Endothelial cell of umbilical vein (primary cell): ENCODE measurements at regions of chr10 and their contacts with region 1.

Region 1: DNA sequence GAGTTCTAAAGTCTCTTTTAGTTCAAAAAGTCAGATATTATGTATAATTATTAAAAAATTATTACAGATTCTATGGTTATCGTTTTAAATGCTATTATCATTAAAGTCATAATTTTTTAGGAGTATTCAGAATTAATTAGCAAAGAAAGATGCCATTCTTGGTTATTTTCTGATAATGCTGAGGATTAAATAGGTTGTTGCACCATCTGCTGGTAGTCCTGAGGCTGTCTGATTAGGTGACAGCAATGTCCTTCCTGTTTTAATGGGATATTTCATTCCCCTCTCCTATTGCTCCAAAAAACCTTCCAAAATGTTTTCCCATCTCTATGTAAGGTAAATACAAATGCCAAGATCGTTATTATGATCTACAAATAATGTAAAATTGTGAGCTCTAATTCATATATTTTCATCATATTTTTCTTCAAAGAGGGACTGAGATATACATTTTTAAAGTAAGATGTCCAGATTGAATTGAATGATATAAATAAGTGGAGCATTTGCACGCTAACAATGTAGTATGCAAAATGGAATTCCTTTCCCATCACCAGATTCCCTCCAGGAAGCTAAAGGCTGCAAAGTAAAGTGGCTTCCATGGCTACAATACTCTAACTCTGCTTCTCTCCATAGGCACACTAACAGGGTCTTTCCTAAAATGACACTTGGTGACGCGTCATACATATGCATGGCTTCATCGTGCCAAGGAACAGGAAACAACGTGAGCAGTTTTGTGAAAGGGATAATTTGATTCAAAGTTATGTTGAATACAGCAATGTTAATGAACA is 58.8 kb upstream of the AKR1E2 start:
- DNase-seq: peak; percentile 74
- H3K4me3 ChIP-seq: no peak overlapping the region
- H3K27ac ChIP-seq: peak overlapping the region; percentile 96
- H3K4me1 ChIP-seq: peaks cover 83% of the 10 kb centered on the region
- H3K27me3 ChIP-seq: no peaks in the 10 kb centered on the region
- CTCF ChIP-seq: peak; percentile 49 to 50
- POLR2A ChIP-seq: no peak

Region 2: GRCh38 chr10:3197348-3198003 is 1569.7 kb before region 1 on chr10:
- CTCF ChIA-PET with region 1: interaction called, 17 read pairs
- POLR2A ChIA-PET with region 1: no interaction called
- dilution Hi-C with region 1: no loop called
- intact Hi-C with region 1: loop called (anchors 1 kb)
- DNase-seq: peak; percentile 86
- H3K4me3 ChIP-seq: peak overlapping the region in 2 of 3 experiments; percentile 1 to 6
- H3K27ac ChIP-seq: no peak overlapping the region
- H3K4me1 ChIP-seq: peaks cover 12% of the 10 kb centered on the region
- H3K27me3 ChIP-seq: peaks cover 0 to 6% of the 10 kb centered on the region in 2 experiments
- CTCF ChIP-seq: peak; percentile 93 to 96
- POLR2A ChIP-seq: no peak

Region 3: DNA sequence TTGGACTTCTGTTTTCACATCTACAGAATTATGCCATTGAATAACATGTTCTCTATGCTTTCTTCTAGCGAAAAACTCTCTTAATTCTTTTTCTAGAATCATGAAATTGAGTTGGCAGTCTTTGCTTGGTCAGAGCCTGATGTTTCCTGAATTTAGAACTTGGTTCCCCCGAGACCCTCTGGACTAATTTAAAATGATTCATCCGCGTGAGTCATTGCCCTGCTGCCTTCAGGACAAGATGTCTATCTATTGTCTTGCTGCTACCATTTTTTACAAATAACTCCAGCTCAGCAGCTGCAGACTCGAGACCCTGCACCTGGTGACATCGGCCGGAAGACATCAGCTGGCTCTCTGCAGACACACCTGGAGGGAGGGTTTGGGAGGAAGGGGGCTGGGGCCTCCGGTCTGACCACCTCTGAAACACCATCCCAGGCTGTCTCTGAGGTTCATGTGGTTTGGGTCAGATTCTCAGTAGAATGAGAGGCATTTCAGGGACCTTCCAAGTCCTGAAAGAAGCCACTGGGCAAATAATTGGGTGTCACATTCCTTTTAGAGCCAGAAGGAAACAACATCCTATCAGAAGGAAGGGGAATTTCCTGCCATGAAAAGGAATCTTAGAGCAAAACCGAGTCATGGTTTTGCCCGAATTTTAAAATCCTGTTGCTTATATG is 961.3 kb before region 1 on chr10:
- CTCF ChIA-PET with region 1: no interaction called
- POLR2A ChIA-PET with region 1: interaction called, 3 read pairs
- dilution Hi-C with region 1: no loop called
- intact Hi-C with region 1: loop called (anchors 1 kb)
- DNase-seq: peak; percentile 96
- H3K4me3 ChIP-seq: peak overlapping the region in 1 of 3 experiments; percentile 31
- H3K27ac ChIP-seq: peak overlapping the region; percentile 100
- H3K4me1 ChIP-seq: peaks cover 70% of the 10 kb centered on the region
- H3K27me3 ChIP-seq: no peaks in the 10 kb centered on the region
- CTCF ChIP-seq: no peak
- POLR2A ChIP-seq: peak; percentile 29

Region 4: DNA sequence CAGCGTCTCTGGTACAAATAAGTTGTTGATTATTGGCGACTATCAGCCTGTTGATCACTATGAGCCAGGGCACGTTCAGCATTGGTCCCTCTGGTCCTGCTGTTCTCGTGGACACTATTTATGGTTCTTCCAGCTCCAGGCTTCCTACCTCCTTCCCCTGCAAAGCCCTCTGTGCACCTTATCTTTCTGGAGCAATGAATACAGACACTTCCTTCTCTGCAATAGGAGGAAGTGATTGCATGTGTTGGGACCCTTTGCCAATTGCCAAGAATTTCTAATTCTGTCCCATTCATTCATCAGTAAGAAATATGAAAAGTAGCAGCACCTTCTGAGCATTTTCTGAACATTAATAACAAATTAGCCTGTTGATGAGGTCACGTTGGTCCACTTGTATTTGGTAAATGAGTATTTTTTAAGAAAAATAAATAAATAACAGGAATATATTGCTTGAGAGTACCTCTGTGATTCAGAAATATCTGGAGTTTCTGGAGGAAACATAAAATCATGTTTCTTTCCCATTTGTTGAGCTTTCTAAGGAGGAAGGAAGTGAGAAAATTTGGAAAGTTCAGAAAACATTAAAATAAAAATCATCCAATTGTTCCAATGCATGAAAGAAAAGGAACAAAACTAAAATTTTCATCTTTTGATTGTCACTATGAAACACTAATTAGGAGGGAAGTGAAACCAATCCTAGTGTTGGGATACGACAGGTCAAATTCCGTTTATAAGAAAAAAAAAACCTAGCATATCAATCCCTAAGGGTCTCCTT is 723.1 kb before region 1 on chr10:
- CTCF ChIA-PET with region 1: no interaction called
- POLR2A ChIA-PET with region 1: no interaction called
- dilution Hi-C with region 1: no loop called
- intact Hi-C with region 1: loop called (anchors 1 kb)
- DNase-seq: peak; percentile 97
- H3K4me3 ChIP-seq: no peak overlapping the region
- H3K27ac ChIP-seq: peak overlapping the region; percentile 66
- H3K4me1 ChIP-seq: peaks cover 21% of the 10 kb centered on the region
- H3K27me3 ChIP-seq: no peaks in the 10 kb centered on the region
- CTCF ChIP-seq: no peak
- POLR2A ChIP-seq: peak; percentile 67

Region 5: GRCh38 chr10:4391683-4392082 is 375.5 kb before region 1 on chr10:
- CTCF ChIA-PET with region 1: no interaction called
- POLR2A ChIA-PET with region 1: no interaction called
- dilution Hi-C with region 1: no loop called
- intact Hi-C with region 1: loop called (anchors 5 kb)
- DNase-seq: peak; percentile 27
- H3K4me3 ChIP-seq: no peak overlapping the region
- H3K27ac ChIP-seq: no peak overlapping the region
- H3K4me1 ChIP-seq: no peaks in the 10 kb centered on the region
- H3K27me3 ChIP-seq: no peaks in the 10 kb centered on the region
- CTCF ChIP-seq: peak in 1 of 2 donors; percentile 15
- POLR2A ChIP-seq: no peak

Region 6: DNA sequence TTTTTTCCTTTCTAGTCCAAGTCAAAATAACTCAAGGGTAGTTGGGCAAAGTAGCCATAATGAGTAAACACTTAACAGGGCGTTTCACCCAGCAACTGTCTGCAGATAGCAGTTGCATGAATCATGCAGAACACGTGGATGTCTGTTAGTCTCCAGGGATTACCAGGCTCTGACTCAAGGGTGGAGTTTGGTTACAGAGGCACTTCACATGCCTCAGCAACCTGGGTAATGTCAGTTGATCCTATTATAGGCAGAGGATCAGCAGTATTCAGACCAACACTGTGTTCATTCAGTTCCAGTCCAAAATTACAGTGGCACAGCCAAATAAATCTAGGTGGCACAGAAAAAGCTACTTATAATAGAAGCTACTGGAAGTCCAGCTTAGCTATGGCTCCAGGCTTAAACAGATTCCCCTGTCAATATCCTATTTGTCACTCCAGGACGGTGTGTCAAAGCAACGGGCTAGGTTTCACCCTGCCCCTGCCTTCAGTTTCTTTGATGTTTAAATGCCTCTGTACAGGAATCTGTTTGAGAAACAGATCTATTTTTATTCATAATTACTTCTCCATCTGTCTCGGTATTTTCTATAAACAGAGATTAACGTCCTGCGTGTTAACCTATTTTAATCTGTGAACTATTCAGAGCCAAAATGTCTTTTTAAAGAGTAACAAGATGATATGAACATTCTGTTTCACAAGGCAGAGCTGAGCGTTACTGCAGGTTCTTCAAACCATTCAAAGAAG is 103.9 kb before region 1 on chr10:
- CTCF ChIA-PET with region 1: interaction called, 46 read pairs
- POLR2A ChIA-PET with region 1: no interaction called
- dilution Hi-C with region 1: no loop called
- intact Hi-C with region 1: loop called (anchors 2 kb)
- DNase-seq: peak; percentile 97
- H3K4me3 ChIP-seq: no peak overlapping the region
- H3K27ac ChIP-seq: peak overlapping the region; percentile 97
- H3K4me1 ChIP-seq: peaks cover 23% of the 10 kb centered on the region
- H3K27me3 ChIP-seq: no peaks in the 10 kb centered on the region
- CTCF ChIP-seq: no peak
- POLR2A ChIP-seq: peak; percentile 65

Region 7: DNA sequence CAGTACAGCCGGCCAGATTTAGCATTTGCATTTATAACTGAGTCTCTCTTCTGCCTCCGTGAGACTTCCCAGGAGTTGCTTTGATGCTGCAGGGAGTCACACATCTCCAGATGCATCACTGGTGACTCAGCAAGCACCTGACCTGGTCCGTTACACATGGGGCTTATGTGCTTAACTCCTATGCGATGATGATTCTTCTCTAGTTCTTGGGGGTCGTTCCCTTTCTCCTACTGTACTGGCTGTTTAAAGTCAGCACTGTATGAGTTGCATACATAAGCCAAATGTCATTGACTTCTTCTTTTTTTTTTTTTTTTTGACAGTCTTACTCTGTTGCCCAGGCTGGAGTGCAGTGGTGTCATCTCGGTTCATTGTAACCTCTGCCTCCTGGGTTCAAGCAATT is 45.8 kb after region 1 on chr10:
- CTCF ChIA-PET with region 1: interaction called, 25 read pairs
- POLR2A ChIA-PET with region 1: interaction called, 3 read pairs
- dilution Hi-C with region 1: no loop called
- intact Hi-C with region 1: loop called (anchors 1 kb)
- DNase-seq: peak; percentile 22
- H3K4me3 ChIP-seq: no peak overlapping the region
- H3K27ac ChIP-seq: no peak overlapping the region
- H3K4me1 ChIP-seq: peaks cover 31% of the 10 kb centered on the region
- H3K27me3 ChIP-seq: peaks cover 0 to 2% of the 10 kb centered on the region in 2 experiments
- CTCF ChIP-seq: no peak
- POLR2A ChIP-seq: no peak

Region 8: DNA sequence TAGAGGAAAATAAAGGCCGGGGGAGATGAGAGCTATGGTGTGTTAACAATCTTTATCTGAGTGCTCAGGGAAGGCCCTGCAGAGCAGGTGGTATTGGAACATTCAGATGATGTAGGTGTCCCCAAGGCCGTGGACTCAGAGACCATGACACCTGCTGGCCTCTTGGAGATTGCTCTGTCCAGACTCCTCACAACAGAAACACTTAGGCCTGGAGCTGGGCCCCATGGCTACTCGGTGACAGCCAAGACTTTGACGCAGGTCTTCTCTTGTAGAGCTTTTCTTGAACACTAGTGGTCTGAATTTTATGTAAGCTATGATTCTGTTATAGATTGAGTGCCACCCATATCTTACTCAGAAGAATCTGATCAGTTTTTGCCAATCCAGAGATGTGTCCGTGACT is 72.2 kb after region 1 on chr10:
- CTCF ChIA-PET with region 1: no interaction called
- POLR2A ChIA-PET with region 1: no interaction called
- dilution Hi-C with region 1: no loop called
- intact Hi-C with region 1: no loop called
- DNase-seq: no peak
- H3K4me3 ChIP-seq: no peak overlapping the region
- H3K27ac ChIP-seq: no peak overlapping the region
- H3K4me1 ChIP-seq: no peaks in the 10 kb centered on the region
- H3K27me3 ChIP-seq: no peaks in the 10 kb centered on the region
- CTCF ChIP-seq: peak in 1 of 2 donors; percentile 1
- POLR2A ChIP-seq: no peak